ENCODE measurements at regions of chr6 and their contacts with region 1.

Region 1: DNA sequence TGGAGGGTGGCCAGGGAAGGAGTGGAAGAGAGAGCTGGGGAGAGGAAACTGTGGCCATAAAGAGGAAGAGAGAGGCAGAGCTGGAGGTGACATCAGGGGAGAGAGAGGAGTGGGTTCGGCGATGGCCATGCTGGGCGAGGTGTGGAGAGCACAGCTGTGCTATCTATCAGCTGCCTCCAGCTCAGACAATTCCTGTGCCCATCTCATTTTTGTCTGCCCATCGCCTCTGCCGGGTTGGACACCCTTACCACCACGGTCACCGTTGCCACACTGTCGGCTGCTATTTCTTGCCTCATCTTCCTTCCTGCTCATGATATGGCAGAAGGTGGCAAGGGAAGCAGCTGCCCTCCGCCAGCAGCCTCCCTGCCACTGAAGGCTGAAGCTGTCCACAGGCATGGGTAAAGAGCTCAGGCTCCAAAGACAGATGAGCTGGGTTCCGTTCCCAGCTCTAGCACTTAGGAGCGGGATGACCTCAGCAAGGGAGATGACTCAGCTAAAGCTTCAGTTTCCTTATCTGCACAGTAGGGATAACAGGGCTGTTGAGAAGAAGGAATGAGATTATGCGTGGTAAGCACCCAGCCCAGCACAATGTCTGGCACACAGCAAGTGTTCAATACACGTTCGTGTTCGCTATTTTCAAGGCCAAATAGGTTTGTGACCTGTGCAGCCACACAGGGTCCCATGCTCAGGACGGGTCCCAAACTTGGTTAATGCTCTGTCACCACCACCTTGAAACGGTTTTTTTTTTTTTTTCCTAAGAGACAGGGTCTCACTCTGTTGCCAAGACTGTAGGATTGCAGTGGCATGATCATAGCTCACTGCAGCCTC is 21.9 kb upstream of the TAF8 start:
- H3K4me3 Mint-ChIP-seq: peak overlapping the region; percentile 67
- H3K27ac Mint-ChIP-seq: peak overlapping the region; percentile 81
- H3K4me1 Mint-ChIP-seq: peaks cover 78% of the 10 kb centered on the region
- H3K27me3 Mint-ChIP-seq: no peaks in the 10 kb centered on the region

Region 2: GRCh38 chr6:41941280-41942066 is 87.0 kb before region 1 on chr6 and contains the start of gene CCND3:
- intact Hi-C with region 1: loop called (anchors 5 kb)
- H3K4me3 Mint-ChIP-seq: peak within 1 kb of the TSS; percentile 99
- H3K27ac Mint-ChIP-seq: peak within 1 kb of the TSS; percentile 90
- H3K4me1 Mint-ChIP-seq: peaks cover 51% of the 10 kb centered on the region
- H3K27me3 Mint-ChIP-seq: no peaks in the 10 kb centered on the region

Measured in dendritic cell treated with granulocyte-macrophage colony-stimulating factor and Interleukin-4, amounts not matched to agents 40 ng/mL and 50 ng/mL, for 4 days (primary cell).